Posterior cingulate gyrus (tissue), 11 donors: ENCODE measurements at regions of chr13 and their contacts with region 1.

Region 1: DNA sequence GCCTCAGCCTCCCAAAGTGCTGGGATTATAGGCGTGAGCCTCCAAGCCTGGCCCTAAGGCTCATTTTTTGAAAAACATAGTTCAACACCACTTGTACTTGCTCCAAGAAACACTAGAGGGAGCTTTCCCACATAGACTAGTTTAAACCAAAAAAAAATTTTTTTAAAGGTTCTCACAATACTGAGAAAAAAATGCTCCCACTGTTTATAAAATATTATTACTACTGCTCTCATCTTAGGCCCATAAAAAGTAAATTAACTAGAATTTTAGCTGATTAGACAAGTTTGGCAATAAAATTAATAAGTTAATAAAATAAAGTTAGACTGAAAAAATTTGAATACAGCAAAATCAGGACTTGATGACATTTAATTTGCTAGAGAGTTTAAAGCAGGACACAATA is 109.5 kb downstream of the TBC1D4 start:
- DNase-seq: no peak

Region 2: GRCh38 chr13:75312884-75313520 is 59.5 kb before region 1 on chr13:
- intact Hi-C with region 1: no loop called
- DNase-seq: no peak

Region 3: GRCh38 chr13:75482070-75482819 is 109.7 kb after region 1 on chr13 and contains the start of gene TBC1D4:
- intact Hi-C with region 1: loop called (anchors 5 kb)
- DNase-seq: peak; percentile 64 to 95 (median 75)